IMR-90 (cell line): ENCODE measurements at regions of chr13 and their contacts with region 1.

Region 1: DNA sequence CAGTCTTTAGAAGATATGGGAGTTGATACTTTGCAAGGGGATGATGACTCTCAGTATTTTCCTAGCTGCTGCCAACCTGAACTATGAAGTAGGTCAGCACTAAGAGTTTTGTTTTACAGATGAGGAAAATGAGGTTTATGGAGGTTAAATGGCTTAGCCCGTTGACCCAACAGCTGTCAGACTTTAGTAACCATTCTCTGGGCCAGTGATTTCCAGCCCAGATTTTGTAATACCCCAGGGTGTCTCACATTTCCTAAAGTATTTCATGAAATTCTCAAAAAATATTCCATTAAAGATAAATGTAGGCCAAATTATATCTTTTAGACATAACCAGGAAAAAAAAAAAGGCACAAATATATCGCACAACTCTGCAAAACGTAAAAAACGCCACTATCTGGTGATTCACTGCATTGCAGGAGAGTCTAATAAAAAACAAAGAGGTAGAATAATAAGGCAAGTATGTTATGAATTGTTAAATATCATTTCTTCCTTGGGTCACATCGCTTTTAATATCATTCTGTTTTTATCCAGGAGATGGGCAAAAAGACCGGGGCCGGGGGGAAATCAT is 112.5 kb downstream of the DACH1 start:
- DNase-seq: no peak
- ATAC-seq: no peak
- H3K4me3 ChIP-seq: no peak overlapping the region
- H3K27ac ChIP-seq: no peak overlapping the region
- H3K4me1 ChIP-seq: no peaks in the 10 kb centered on the region
- H3K27me3 ChIP-seq: no peaks in the 10 kb centered on the region
- CTCF ChIP-seq: no peak
- POLR2A ChIP-seq: no peak
- RAD21 ChIP-seq: no peak

Region 2: GRCh38 chr13:70541451-70541850 is 1213.0 kb before region 1 on chr13:
- CTCF ChIA-PET with region 1: no interaction called
- POLR2A ChIA-PET with region 1: no interaction called
- dilution Hi-C with region 1: no loop called
- in situ Hi-C with region 1: no loop called
- intact Hi-C with region 1: no loop called
- DNase-seq: no peak
- ATAC-seq: no peak
- H3K4me3 ChIP-seq: no peak overlapping the region
- H3K27ac ChIP-seq: no peak overlapping the region
- H3K4me1 ChIP-seq: no peaks in the 10 kb centered on the region
- H3K27me3 ChIP-seq: no peaks in the 10 kb centered on the region
- CTCF ChIP-seq: no peak
- POLR2A ChIP-seq: no peak
- RAD21 ChIP-seq: no peak

Region 3: GRCh38 chr13:71704656-71705055 is 49.8 kb before region 1 on chr13:
- CTCF ChIA-PET with region 1: no interaction called
- POLR2A ChIA-PET with region 1: no interaction called
- dilution Hi-C with region 1: no loop called
- in situ Hi-C with region 1: no loop called
- intact Hi-C with region 1: loop called (anchors 5 kb)
- DNase-seq: no peak
- ATAC-seq: no peak
- H3K4me3 ChIP-seq: no peak overlapping the region
- H3K27ac ChIP-seq: no peak overlapping the region
- H3K4me1 ChIP-seq: no peaks in the 10 kb centered on the region
- H3K27me3 ChIP-seq: no peaks in the 10 kb centered on the region
- CTCF ChIP-seq: no peak
- POLR2A ChIP-seq: no peak
- RAD21 ChIP-seq: no peak